MCF 10A (cell line): ENCODE measurements at regions of chr3 and their contacts with region 1.

Region 1: GRCh38 chr3:49906004-49906743 is 2.5 kb upstream of the MST1R start:
- DNase-seq: peak; percentile 72
- H3K4me3 Mint-ChIP-seq: peak overlapping the region; percentile 59
- H3K27ac Mint-ChIP-seq: peak overlapping the region; percentile 59
- H3K4me1 Mint-ChIP-seq: peaks cover 15% of the 10 kb centered on the region
- H3K27me3 Mint-ChIP-seq: no peaks in the 10 kb centered on the region
- CTCF ChIP-seq: peak; percentile 70

Region 2: DNA sequence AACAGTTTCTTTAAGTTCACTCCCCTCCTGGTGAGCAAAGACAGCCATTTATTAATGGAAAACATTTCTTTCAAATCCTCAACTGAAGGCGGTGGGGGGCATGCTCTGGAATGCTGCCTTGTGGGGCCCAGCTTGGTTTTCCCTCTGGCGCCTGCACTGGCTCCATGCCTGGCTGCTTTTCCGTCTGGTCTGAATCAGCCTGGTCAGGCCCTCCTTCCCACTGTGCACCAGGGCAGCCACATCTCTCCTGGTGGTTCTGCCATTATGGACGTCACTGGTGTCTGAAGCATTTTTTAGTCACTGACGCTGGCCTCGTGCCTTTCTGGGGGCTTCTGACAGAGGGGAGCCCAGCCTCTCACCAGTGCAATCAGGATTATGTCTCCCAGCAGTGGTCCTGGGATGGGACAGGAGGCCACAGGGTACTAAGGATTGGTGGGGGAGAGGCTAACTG is 289.7 kb before region 1 on chr3:
- CTCF ChIA-PET with region 1: no interaction called
- POLR2A ChIA-PET with region 1: no interaction called
- intact Hi-C with region 1: no loop called
- DNase-seq: no peak
- H3K4me3 Mint-ChIP-seq: no peak overlapping the region
- H3K27ac Mint-ChIP-seq: no peak overlapping the region
- H3K4me1 Mint-ChIP-seq: no peaks in the 10 kb centered on the region
- H3K27me3 Mint-ChIP-seq: peaks cover 19% of the 10 kb centered on the region
- CTCF ChIP-seq: no peak

Region 3: DNA sequence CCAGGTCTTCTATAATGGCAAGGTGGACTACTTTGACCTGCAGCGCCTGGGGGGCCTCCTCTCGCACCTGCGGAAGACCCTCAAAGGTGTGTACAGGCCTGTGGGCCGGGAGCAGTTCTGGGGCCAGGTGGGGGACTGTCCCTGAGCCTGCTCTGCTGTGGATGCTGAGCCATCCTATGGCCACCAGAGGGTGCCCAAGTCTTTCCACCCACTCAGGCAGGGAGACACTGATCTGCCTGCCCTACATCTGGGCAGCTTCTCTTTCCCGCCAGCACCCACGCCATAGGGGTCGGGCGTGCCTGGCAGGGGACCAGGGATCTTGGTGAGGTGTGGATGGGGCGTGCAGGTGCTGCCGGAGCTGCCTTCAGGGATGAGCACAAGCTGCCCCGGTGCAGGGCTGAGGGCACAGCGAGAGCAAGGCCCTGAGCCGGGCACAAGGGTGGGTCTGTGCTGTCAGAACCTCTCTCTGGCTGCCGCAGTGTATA is 202.7 kb before region 1 on chr3:
- CTCF ChIA-PET with region 1: interaction called, 4 read pairs
- POLR2A ChIA-PET with region 1: no interaction called
- intact Hi-C with region 1: loop called (anchors 1 kb)
- DNase-seq: peak; percentile 79
- H3K4me3 Mint-ChIP-seq: no peak overlapping the region
- H3K27ac Mint-ChIP-seq: no peak overlapping the region
- H3K4me1 Mint-ChIP-seq: peaks cover 14% of the 10 kb centered on the region
- H3K27me3 Mint-ChIP-seq: no peaks in the 10 kb centered on the region
- CTCF ChIP-seq: peak; percentile 90

Region 4: GRCh38 chr3:49723628-49724551 is 182.3 kb before region 1 on chr3 and contains the start of gene GMPPB:
- CTCF ChIA-PET with region 1: no interaction called
- POLR2A ChIA-PET with region 1: interaction called, 4 read pairs
- intact Hi-C with region 1: loop called (anchors 5 kb)
- DNase-seq: peak; percentile 97
- H3K4me3 Mint-ChIP-seq: peak within 1 kb of the TSS; percentile 83
- H3K27ac Mint-ChIP-seq: peak within 1 kb of the TSS; percentile 78
- H3K4me1 Mint-ChIP-seq: peaks cover 14% of the 10 kb centered on the region
- H3K27me3 Mint-ChIP-seq: no peaks in the 10 kb centered on the region
- CTCF ChIP-seq: no peak
- total RNA-seq, gene GMPPB: 84.3 and 88.1 TPM in 2 replicates

Region 5: DNA sequence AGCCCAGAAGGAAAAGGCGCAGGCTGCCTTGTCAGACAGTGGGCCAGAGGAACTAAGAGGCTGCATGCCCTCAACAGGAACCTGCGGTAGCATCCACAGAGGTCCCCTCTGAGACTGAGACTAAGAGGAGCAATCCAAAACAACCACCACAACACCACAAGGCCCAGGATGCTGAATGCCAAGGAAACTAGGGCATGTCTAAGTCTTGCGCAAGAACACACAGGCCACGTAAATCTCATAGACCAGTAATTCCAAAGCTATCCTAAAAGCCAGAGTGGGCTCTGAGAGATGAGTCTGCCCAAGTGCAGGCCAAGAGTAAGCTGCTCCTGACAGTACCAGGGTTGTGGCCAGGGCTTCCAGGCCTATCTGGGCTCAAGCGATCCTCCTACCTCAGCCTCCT is 10.5 kb after region 1 on chr3:
- CTCF ChIA-PET with region 1: interaction called, 35 read pairs
- POLR2A ChIA-PET with region 1: interaction called, 20 read pairs
- intact Hi-C with region 1: no loop called
- DNase-seq: no peak
- H3K4me3 Mint-ChIP-seq: no peak overlapping the region
- H3K27ac Mint-ChIP-seq: no peak overlapping the region
- H3K4me1 Mint-ChIP-seq: no peaks in the 10 kb centered on the region
- H3K27me3 Mint-ChIP-seq: no peaks in the 10 kb centered on the region
- CTCF ChIP-seq: no peak

Region 6: GRCh38 chr3:49929331-49930240 is 23.4 kb after region 1 on chr3 and contains the start of gene MON1A:
- CTCF ChIA-PET with region 1: interaction called, 12 read pairs
- POLR2A ChIA-PET with region 1: interaction called, 20 read pairs
- intact Hi-C with region 1: no loop called
- DNase-seq: peak; percentile 95
- H3K4me3 Mint-ChIP-seq: peak within 1 kb of the TSS; percentile 87
- H3K27ac Mint-ChIP-seq: peak within 1 kb of the TSS; percentile 75
- H3K4me1 Mint-ChIP-seq: peaks cover 12% of the 10 kb centered on the region
- H3K27me3 Mint-ChIP-seq: no peaks in the 10 kb centered on the region
- CTCF ChIP-seq: peak; percentile 40
- total RNA-seq, gene MON1A: 9.6 and 18.6 TPM in 2 replicates

Region 7: GRCh38 chr3:49939858-49940666 is 33.9 kb after region 1 on chr3 and contains the start of gene RBM6:
- CTCF ChIA-PET with region 1: interaction called, 4 read pairs
- POLR2A ChIA-PET with region 1: interaction called, 30 read pairs
- intact Hi-C with region 1: no loop called
- DNase-seq: peak; percentile 97
- H3K4me3 Mint-ChIP-seq: peak within 1 kb of the TSS; percentile 93
- H3K27ac Mint-ChIP-seq: peak within 1 kb of the TSS; percentile 98
- H3K4me1 Mint-ChIP-seq: peaks cover 5% of the 10 kb centered on the region
- H3K27me3 Mint-ChIP-seq: no peaks in the 10 kb centered on the region
- CTCF ChIP-seq: no peak
- total RNA-seq, gene RBM6: 58.0 and 65.8 TPM in 2 replicates